Transverse colon (tissue), 4 donors: ENCODE measurements at regions of chr6 and their contacts with region 1.

Region 1: DNA sequence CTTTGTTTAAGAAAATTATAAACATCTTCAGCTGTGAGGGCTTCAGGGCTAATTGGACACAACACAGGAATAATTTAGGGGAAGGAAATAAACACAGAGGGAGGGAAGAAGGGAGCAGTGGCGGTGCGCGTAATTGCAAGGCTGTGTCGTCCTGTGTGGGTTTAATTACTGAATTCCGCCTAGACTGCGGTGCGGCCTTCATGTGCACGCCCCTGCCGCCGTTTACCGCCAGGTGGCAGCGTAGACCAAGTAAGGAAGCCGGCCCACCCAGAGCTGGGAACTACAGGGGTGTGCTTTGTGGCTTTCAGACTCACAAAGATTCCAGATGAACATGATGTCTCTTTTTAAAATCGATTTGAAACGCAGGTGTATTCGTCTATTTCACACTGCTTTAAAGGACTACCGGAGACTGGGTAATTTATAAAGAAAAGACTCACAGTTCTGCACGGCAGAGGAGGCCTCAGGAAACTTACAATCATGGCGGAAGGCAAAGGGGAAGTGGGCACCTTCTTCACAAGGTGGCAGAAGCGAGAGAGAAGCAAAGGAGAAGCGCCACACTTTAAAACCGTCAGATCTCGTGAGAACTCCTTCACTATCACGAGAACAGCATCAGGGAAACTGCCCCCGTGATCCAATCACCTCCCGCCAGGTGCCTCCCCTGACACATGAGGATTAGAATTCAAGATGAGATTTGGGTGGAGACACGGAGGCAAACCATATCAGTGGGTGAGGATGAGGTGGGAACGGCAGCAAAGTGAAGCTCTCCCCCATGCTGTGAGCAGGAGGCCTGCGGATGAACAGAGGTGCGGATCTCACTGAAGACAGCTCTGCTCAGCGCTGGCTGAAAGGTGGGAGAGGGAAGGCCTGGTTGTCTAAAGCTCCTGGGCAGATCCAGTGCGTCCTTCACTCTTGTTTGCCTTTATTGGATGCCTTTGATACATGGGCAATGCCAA is 222.0 kb upstream of the PDE10A start:
- DNase-seq: peak; percentile 78
- H3K4me3 ChIP-seq: no peak overlapping the region
- H3K27ac ChIP-seq: peak overlapping the region in 1 of 4 donors; percentile 25
- H3K4me1 ChIP-seq: peaks cover 0 to 3% (median 0%) of the 10 kb centered on the region in 4 donors
- H3K27me3 ChIP-seq: no peaks in the 10 kb centered on the region
- CTCF ChIP-seq: peak; percentile 80 to 91 (median 84)
- EP300 ChIP-seq: no peak
- POLR2A ChIP-seq: no peak

Region 2: DNA sequence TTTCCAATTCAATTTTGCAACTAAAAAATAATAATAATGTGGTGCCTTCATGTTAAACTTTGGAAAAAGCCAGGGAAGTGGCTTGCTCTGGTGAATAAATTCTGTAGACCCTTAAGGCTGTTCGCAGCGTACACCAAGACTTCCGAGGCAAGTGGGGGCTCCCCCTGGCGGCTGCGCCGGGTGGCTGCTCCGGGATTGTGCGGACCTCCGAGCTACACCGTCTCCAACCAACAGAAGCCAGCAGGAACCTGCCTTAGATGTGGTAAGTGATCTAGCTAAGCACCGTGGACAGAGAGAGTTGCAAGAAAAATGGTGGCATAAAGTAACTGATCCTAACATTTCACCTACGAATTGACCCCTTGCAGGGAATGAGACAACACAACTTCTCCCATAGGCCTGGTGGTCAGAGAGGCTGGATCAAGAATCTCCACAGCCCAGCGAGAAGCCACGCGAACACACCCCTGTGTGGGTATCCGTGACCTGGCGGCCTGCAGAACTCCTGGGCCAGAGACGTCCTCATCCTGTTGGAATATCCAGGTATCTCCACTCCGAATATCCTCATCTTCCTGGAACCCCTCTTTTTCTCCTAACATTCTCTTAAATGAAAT is 212.9 kb after region 1 on chr6:
- in situ Hi-C with region 1: loop called in 3 of 4 experiments (anchors 5 kb)
- intact Hi-C with region 1: loop called (anchors 2 kb)
- DNase-seq: peak; percentile 69
- H3K4me3 ChIP-seq: peak overlapping the region in 3 of 4 donors; percentile 16 to 47 (median 30)
- H3K27ac ChIP-seq: peak overlapping the region in 2 of 4 donors; percentile 15 to 44
- H3K4me1 ChIP-seq: no peaks in the 10 kb centered on the region
- H3K27me3 ChIP-seq: no peaks in the 10 kb centered on the region
- CTCF ChIP-seq: peak; percentile 74 to 91 (median 86)
- EP300 ChIP-seq: no peak
- POLR2A ChIP-seq: no peak

Region 3: GRCh38 chr6:166382933-166383801 is 498.1 kb after region 1 on chr6 and contains the start of gene MPC1:
- in situ Hi-C with region 1: loop called in 1 of 4 experiments (anchors 25 kb)
- intact Hi-C with region 1: no loop called
- DNase-seq: peak; percentile 97
- H3K4me3 ChIP-seq: peak within 1 kb of the TSS; percentile 77 to 95 (median 85)
- H3K27ac ChIP-seq: peak within 1 kb of the TSS; percentile 96 to 99 (median 98)
- H3K4me1 ChIP-seq: peaks cover 0 to 25% (median 8%) of the 10 kb centered on the region in 4 donors
- H3K27me3 ChIP-seq: no peaks in the 10 kb centered on the region
- CTCF ChIP-seq: no peak
- EP300 ChIP-seq: no peak
- POLR2A ChIP-seq: peak; percentile 93
- total RNA-seq, gene MPC1: 90.8 to 131 (median 129) TPM